ENCODE measurements at regions of chr6 and their contacts with region 1.

Region 1: DNA sequence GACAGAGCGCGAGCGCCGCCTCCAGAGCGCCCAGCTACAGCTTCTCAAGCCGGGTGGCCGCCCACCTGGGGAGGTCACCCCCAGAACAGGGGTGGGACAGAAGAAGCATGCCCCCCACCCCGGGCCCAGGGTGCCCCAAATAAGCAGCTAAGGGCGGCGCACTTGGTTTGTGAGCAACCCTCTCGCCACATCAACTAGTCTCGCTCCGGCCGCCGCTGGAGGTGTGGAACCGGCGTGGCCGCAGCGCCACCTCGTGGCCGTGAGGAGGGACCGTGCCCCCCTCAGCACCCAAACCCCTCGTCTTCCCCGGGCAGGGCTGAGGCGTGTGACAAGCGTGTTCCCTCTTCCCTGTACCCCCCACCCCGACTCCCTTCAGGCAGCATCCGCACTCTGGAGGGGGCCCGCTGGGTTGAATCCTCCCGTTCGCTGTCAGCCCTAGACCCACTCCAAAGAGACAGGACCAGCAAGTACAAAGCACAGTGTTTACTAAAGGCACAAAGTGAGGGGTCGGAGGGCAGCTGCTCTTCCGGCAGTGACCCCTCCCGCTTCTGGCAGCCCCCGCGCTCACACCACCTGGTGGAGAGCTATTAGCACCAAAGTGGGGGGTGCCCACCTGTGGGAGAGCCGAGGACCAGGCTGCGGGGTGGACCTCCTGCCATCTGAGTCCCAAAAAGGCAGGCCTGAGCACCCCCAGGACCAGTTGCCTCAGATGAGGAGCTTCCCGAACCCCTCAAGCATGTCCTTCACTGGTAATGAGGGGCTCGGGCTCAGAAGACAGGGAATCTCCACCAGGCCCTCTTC is 45.4 kb downstream of the MDFI start:
- DNase-seq: peak; percentile 70 to 88 (median 79)
- ATAC-seq: peak; percentile 91
- H3K4me3 ChIP-seq: peak overlapping the region; percentile 35 to 47
- H3K4me3 Mint-ChIP-seq: peak overlapping the region; percentile 77
- H3K27ac ChIP-seq: peak overlapping the region; percentile 39 to 48
- H3K27ac Mint-ChIP-seq: peak overlapping the region; percentile 76
- H3K4me1 ChIP-seq: peaks cover 3% of the 10 kb centered on the region
- H3K4me1 Mint-ChIP-seq: peaks cover 8% of the 10 kb centered on the region
- H3K27me3 ChIP-seq: peaks cover 0 to 2% of the 10 kb centered on the region in 2 experiments
- H3K27me3 Mint-ChIP-seq: peaks cover 1% of the 10 kb centered on the region
- CTCF ChIP-seq: peak; percentile 76

Region 2: GRCh38 chr6:41306187-41306854 is 377.4 kb before region 1 on chr6:
- CTCF ChIA-PET with region 1: interaction called, 6 read pairs
- POLR2A ChIA-PET with region 1: no interaction called
- intact Hi-C with region 1: loop called (anchors 1 to 10 kb)
- DNase-seq: peak in 7 of 9 experiments; percentile 19 to 78 (median 34)
- ATAC-seq: no peak
- H3K4me3 ChIP-seq: no peak overlapping the region
- H3K4me3 Mint-ChIP-seq: no peak overlapping the region
- H3K27ac ChIP-seq: no peak overlapping the region
- H3K27ac Mint-ChIP-seq: no peak overlapping the region
- H3K4me1 ChIP-seq: peaks cover 4% of the 10 kb centered on the region
- H3K4me1 Mint-ChIP-seq: peaks cover 13% of the 10 kb centered on the region
- H3K27me3 ChIP-seq: no peaks in the 10 kb centered on the region
- H3K27me3 Mint-ChIP-seq: no peaks in the 10 kb centered on the region
- CTCF ChIP-seq: peak; percentile 79

Region 3: GRCh38 chr6:41424370-41425058 is 259.2 kb before region 1 on chr6:
- CTCF ChIA-PET with region 1: interaction called, 12 read pairs
- POLR2A ChIA-PET with region 1: no interaction called
- intact Hi-C with region 1: loop called (anchors 1 kb)
- DNase-seq: peak; percentile 67 to 89 (median 78)
- ATAC-seq: peak; percentile 62
- H3K4me3 ChIP-seq: no peak overlapping the region
- H3K4me3 Mint-ChIP-seq: no peak overlapping the region
- H3K27ac ChIP-seq: no peak overlapping the region
- H3K27ac Mint-ChIP-seq: no peak overlapping the region
- H3K4me1 ChIP-seq: peaks cover 32% of the 10 kb centered on the region
- H3K4me1 Mint-ChIP-seq: peaks cover 9% of the 10 kb centered on the region
- H3K27me3 ChIP-seq: peaks cover 16 to 28% of the 10 kb centered on the region in 2 experiments
- H3K27me3 Mint-ChIP-seq: peaks cover 21% of the 10 kb centered on the region
- CTCF ChIP-seq: peak; percentile 91

Region 4: DNA sequence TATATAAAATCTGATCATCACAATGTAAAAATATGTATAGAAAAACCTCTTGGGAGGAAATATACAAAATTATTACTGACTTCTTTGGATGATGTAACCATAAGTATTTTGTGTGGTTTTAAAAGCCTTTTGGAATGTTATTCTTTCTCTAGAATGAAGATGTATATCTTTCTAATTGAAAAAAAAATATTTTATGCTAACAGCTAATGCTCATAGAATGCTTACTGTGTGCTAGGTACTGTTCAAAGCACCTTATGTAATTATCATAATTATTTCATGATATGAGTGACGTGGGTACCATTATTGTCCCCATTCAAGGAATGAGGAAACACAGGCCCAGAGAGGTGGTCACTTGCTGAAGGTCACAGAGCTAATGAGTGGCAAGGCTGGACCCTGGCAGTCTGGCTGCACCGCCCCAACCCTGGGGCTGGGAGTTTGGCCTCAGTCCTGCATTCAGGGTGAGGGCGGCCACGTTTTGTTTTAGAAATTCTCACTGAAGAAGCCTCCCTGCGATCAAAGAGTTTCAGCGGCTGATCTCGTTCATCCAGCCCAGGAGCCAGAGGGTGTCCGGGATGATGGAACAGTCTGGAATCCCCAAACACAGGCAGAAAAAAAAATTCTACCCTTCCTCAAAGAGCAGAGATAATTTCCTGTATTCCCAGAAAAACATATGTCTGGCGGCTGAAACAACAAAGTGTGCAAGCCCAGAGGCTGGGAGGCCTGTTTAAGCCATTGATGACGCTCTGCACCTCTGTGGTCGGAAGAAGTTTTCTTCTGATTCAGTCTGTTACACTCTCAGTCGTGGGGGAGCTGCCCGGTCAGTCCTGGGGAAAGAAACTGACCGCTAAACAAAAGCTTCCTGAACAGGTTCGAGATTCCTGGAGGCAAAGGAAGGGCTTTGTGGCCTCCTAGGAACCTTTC is 14.4 kb after region 1 on chr6:
- CTCF ChIA-PET with region 1: interaction called, 28 read pairs
- POLR2A ChIA-PET with region 1: interaction called, 3 read pairs
- intact Hi-C with region 1: no loop called
- DNase-seq: no peak
- ATAC-seq: no peak
- H3K4me3 ChIP-seq: no peak overlapping the region
- H3K4me3 Mint-ChIP-seq: no peak overlapping the region
- H3K27ac ChIP-seq: no peak overlapping the region
- H3K27ac Mint-ChIP-seq: no peak overlapping the region
- H3K4me1 ChIP-seq: no peaks in the 10 kb centered on the region
- H3K4me1 Mint-ChIP-seq: no peaks in the 10 kb centered on the region
- H3K27me3 ChIP-seq: no peaks in the 10 kb centered on the region
- H3K27me3 Mint-ChIP-seq: no peaks in the 10 kb centered on the region
- CTCF ChIP-seq: no peak

Region 5: DNA sequence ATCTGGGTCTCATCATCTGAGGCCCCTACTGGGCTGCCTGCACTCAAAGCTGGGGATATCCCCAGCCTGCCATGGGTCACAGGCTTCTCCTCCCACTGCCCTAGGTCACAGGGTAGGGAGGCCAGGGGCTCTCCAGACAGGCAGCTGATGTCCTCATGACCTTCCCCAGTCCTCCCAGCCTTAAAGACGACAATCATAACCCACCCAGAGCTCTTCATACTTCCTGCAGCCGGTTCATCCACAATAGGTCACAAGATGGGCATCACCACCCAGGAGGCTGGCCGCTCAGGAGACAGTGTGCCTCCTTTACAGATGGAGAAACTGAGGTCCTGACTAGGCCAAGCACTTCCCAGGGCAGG is 36.5 kb after region 1 on chr6:
- CTCF ChIA-PET with region 1: interaction called, 10 read pairs
- POLR2A ChIA-PET with region 1: no interaction called
- intact Hi-C with region 1: no loop called
- DNase-seq: no peak
- ATAC-seq: no peak
- H3K4me3 ChIP-seq: no peak overlapping the region
- H3K4me3 Mint-ChIP-seq: no peak overlapping the region
- H3K27ac ChIP-seq: no peak overlapping the region
- H3K27ac Mint-ChIP-seq: no peak overlapping the region
- H3K4me1 ChIP-seq: peaks cover 14% of the 10 kb centered on the region
- H3K4me1 Mint-ChIP-seq: peaks cover 17% of the 10 kb centered on the region
- H3K27me3 ChIP-seq: no peaks in the 10 kb centered on the region
- H3K27me3 Mint-ChIP-seq: no peaks in the 10 kb centered on the region
- CTCF ChIP-seq: no peak